ENCODE measurements at regions of chr5 and their contacts with region 1.

Region 1: GRCh38 chr5:163695830-163696578 is 190.6 kb downstream of the MAT2B start:
- DNase-seq: peak; percentile 38
- ATAC-seq: peak; percentile 100
- H3K4me3 ChIP-seq: no peak overlapping the region
- H3K27ac ChIP-seq: no peak overlapping the region
- H3K4me1 ChIP-seq: no peaks in the 10 kb centered on the region
- H3K27me3 ChIP-seq: no peaks in the 10 kb centered on the region; a peak in 1 of 5 replicates
- CTCF ChIP-seq: peak; percentile 80
- EP300 ChIP-seq: no peak
- POLR2A ChIP-seq: no peak
- RAD21 ChIP-seq: no peak

Region 2: DNA sequence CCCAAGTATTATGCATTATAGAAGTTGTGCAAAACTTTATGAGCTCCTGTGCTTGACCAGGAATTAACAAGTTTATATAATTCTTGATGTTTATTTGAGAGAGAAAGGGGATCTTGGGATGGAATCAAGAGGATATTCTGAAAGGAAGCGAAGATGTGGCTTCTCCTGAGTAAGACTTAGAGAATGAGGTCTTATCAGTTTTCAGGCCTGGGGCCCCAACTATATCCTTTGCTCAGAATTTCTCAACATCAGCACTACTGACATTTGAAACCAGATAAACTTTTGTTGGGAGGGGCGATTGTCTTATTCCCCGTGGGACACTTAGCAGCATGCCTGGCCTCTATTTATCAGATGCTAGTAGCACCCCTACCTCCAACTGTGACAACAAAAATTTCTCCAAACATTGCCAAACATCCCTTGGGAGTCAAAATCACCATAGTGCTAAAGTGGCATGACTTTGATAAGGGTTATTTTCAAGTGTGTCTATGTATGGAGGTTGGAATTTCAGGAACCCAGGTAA is 377.1 kb after region 1 on chr5:
- CTCF ChIA-PET with region 1: no interaction called
- POLR2A ChIA-PET with region 1: no interaction called
- in situ Hi-C with region 1: no loop called
- intact Hi-C with region 1: loop called (anchors 5 kb)
- DNase-seq: no peak
- ATAC-seq: no peak
- H3K4me3 ChIP-seq: no peak overlapping the region
- H3K27ac ChIP-seq: no peak overlapping the region
- H3K4me1 ChIP-seq: no peaks in the 10 kb centered on the region
- H3K27me3 ChIP-seq: no peaks in the 10 kb centered on the region
- CTCF ChIP-seq: no peak
- EP300 ChIP-seq: no peak
- POLR2A ChIP-seq: no peak
- RAD21 ChIP-seq: no peak

Region 3: GRCh38 chr5:164475339-164475977 is 779.5 kb after region 1 on chr5:
- CTCF ChIA-PET with region 1: no interaction called
- POLR2A ChIA-PET with region 1: no interaction called
- in situ Hi-C with region 1: no loop called
- intact Hi-C with region 1: loop called (anchors 2 kb)
- DNase-seq: peak; percentile 10
- ATAC-seq: no peak
- H3K4me3 ChIP-seq: no peak overlapping the region
- H3K27ac ChIP-seq: no peak overlapping the region
- H3K4me1 ChIP-seq: no peaks in the 10 kb centered on the region
- H3K27me3 ChIP-seq: no peaks in the 10 kb centered on the region
- CTCF ChIP-seq: peak; percentile 39
- EP300 ChIP-seq: no peak
- POLR2A ChIP-seq: no peak
- RAD21 ChIP-seq: no peak

Region 4: GRCh38 chr5:164504141-164504772 is 808.3 kb after region 1 on chr5:
- CTCF ChIA-PET with region 1: interaction called, 5 read pairs
- POLR2A ChIA-PET with region 1: no interaction called
- in situ Hi-C with region 1: no loop called
- intact Hi-C with region 1: loop called (anchors 1 kb)
- DNase-seq: peak; percentile 34
- ATAC-seq: peak; percentile 47; the same call in 1 of the 3 replicates
- H3K4me3 ChIP-seq: no peak overlapping the region
- H3K27ac ChIP-seq: no peak overlapping the region
- H3K4me1 ChIP-seq: no peaks in the 10 kb centered on the region
- H3K27me3 ChIP-seq: no peaks in the 10 kb centered on the region
- CTCF ChIP-seq: peak; percentile 72
- EP300 ChIP-seq: no peak
- POLR2A ChIP-seq: no peak
- RAD21 ChIP-seq: 0 out of 2 replicates have a peak, but pooled peaks have one; percentile 32

Measured in HepG2 (cell line).